ENCODE measurements at regions of chr3 and their contacts with region 1.

Region 1: DNA sequence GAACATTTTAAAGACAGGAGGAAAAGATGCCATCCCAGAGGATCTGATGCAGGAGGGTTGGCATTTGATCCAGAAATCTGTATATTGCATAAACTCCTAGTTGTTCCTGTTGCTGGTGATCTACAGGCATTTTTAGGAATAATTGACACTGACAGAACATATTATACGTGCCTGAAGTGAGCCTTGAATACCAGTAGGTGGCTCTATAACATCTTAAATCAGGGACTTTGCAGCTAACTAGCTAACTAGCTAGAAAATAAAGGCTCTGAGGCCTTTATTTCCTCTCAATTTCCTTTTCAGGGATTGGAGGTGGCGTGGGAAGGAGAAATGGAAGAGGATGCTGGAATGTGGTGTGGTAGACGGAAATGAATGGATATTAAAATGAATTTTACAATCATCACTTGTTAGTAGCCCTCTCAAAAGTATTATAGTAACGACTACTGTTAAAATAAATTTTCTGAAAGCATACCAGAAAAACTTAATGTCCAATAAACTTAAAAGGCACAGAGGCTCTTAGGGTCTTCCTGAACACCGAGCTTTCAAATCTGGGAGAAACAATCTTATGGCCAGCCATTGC is 73.9 kb upstream of the ZBED2 start:
- DNase-seq: no peak
- H3K4me3 Mint-ChIP-seq: no peak overlapping the region
- H3K27ac Mint-ChIP-seq: peak overlapping the region; percentile 63
- H3K4me1 Mint-ChIP-seq: peaks cover 85% of the 10 kb centered on the region
- H3K27me3 Mint-ChIP-seq: no peaks in the 10 kb centered on the region

Region 2: DNA sequence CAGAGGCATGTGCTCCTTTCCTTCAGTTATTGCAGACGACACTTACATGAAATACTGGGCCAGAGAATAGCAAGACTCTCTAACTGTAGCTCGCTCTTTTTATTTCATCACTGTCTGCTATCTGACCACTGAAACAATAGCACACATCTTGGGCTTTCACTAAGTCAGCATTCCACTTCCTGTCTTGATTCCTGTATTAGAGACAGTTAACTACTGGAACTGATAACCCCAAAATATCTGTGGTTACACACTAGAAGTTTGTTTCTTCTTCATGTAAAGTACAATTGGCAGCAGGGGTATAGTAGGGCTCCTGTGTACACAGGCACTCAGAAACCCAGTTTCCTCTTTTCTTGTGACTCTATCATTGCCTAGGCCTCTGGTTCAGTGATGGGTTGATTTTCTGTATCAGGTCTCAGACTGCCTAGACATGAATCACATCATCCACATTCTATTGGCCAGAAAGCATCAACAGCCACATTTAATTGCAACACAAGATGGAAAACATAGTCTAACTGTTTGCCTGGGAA is 357.2 kb before region 1 on chr3:
- intact Hi-C with region 1: loop called (anchors 5 kb)
- DNase-seq: no peak
- H3K4me3 Mint-ChIP-seq: peak overlapping the region; percentile 45
- H3K27ac Mint-ChIP-seq: peak overlapping the region; percentile 92
- H3K4me1 Mint-ChIP-seq: no peaks in the 10 kb centered on the region
- H3K27me3 Mint-ChIP-seq: no peaks in the 10 kb centered on the region

Region 3: DNA sequence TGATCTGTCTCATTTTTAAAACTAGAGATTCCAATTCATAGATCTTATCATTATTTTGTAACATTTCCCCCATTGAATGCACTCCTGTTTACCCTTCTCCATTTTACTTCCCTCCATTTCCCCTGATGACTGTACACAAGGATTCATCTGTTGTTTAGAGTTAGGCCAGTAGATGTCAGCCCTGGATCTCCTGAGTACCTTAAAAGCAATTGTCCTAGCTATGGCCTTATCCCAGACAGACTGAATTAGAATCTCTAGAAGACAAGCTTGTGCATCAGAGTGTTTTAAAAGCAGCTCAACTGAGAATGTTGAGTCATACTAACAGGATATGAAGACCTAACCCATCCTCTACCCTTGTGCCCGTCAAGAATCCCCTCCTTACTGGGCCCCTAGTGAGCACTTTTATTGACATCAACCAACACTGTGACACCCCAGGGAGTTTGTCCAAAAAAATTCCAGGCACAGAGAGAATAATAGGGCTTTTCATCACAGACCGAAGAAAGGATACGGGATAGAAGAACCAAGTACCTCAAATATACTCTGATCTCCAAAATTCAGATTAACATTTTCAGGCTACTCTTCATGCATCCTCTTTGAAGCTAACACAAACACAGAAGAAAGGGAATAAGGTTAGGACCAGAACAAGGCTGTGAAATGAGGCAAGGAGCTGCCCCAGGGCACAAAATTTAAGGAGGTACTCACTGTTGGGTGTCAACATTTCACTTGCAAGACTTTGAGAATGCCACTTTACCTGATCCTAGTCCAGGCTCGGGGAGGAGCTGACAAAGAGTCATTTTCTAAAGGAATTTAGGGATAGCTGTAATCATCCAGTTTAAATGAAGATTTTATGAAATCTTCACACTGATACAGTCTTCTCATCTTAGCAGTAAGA is 91.0 kb before region 1 on chr3:
- intact Hi-C with region 1: loop called (anchors 1 kb)
- DNase-seq: no peak
- H3K4me3 Mint-ChIP-seq: peak overlapping the region; percentile 1
- H3K27ac Mint-ChIP-seq: peak overlapping the region; percentile 70
- H3K4me1 Mint-ChIP-seq: peaks cover 82% of the 10 kb centered on the region
- H3K27me3 Mint-ChIP-seq: no peaks in the 10 kb centered on the region

Region 4: GRCh38 chr3:111616417-111617105 is 52.4 kb before region 1 on chr3:
- intact Hi-C with region 1: loop called (anchors 1 kb)
- DNase-seq: peak; percentile 61
- H3K4me3 Mint-ChIP-seq: peak overlapping the region; percentile 70
- H3K27ac Mint-ChIP-seq: peak overlapping the region; percentile 98
- H3K4me1 Mint-ChIP-seq: peaks cover 84% of the 10 kb centered on the region
- H3K27me3 Mint-ChIP-seq: no peaks in the 10 kb centered on the region

Region 5: GRCh38 chr3:111700054-111700453 is 31.1 kb after region 1 on chr3:
- intact Hi-C with region 1: loop called (anchors 1 kb)
- DNase-seq: no peak
- H3K4me3 Mint-ChIP-seq: peak overlapping the region; percentile 44
- H3K27ac Mint-ChIP-seq: peak overlapping the region; percentile 86
- H3K4me1 Mint-ChIP-seq: peaks cover 13% of the 10 kb centered on the region
- H3K27me3 Mint-ChIP-seq: no peaks in the 10 kb centered on the region

Region 6: GRCh38 chr3:111831840-111832239 is 162.8 kb after region 1 on chr3:
- intact Hi-C with region 1: loop called (anchors 2 kb)
- DNase-seq: peak; percentile 2
- H3K4me3 Mint-ChIP-seq: no peak overlapping the region
- H3K27ac Mint-ChIP-seq: no peak overlapping the region
- H3K4me1 Mint-ChIP-seq: peaks cover 5% of the 10 kb centered on the region
- H3K27me3 Mint-ChIP-seq: no peaks in the 10 kb centered on the region

Region 7: GRCh38 chr3:112043603-112044201 is 374.7 kb after region 1 on chr3:
- intact Hi-C with region 1: loop called (anchors 1 kb)
- DNase-seq: peak; percentile 29
- H3K4me3 Mint-ChIP-seq: no peak overlapping the region
- H3K27ac Mint-ChIP-seq: no peak overlapping the region
- H3K4me1 Mint-ChIP-seq: no peaks in the 10 kb centered on the region
- H3K27me3 Mint-ChIP-seq: no peaks in the 10 kb centered on the region

Measured in activated T-helper 1 cell treated with anti-CD3 and anti-CD28 coated beads, Interleukin-12 subunit alpha, Interleukin-12 subunit beta, Interleukin-2, Interleukin-4 antibody, amounts not matched to agents 30 ng/mL and 10 ng/mL and 1 ng/mL, durations not matched to agents 14 hours and 24 hours and 36 hours (primary cell).